ENCODE measurements at regions of chr2 and their contacts with region 1.

Region 1: GRCh38 chr2:33475224-33476130 is 972 bp upstream of the RASGRP3 start:
- DNase-seq: no peak
- ATAC-seq: peak; percentile 64
- H3K4me3 ChIP-seq: peak overlapping the region; percentile 91
- H3K27ac ChIP-seq: peak overlapping the region; percentile 97
- H3K4me1 ChIP-seq: peaks cover 3% of the 10 kb centered on the region; the same call in 1 of the 2 replicates
- H3K27me3 ChIP-seq: no peaks in the 10 kb centered on the region
- CTCF ChIP-seq: peak; percentile 86 to 93 (median 88)
- EP300 ChIP-seq: peak in 1 of 2 experiments; percentile 37; a peak in 1 of 4 replicates
- POLR2A ChIP-seq: peak; percentile 3; the same call in 1 of the 2 replicates
- RAD21 ChIP-seq: peak; percentile 74

Region 2: DNA sequence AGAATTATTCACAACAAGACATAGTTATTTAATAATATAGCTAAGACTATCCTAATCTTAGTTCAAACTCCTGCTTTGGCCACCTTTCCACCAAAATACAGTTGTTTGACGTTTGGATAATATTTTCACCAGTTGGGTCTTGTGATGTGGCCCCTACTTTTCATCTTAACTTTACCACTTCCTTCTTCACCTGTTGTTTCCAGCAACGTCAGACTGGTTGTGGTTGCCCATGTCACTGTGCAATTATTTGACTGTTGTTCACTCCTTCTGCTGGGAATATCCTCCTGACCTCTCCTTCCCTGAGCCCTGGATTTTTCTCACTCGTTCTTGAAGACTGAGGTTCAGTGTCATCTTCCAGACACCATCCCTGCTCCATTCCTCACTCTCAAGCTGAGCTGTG is 131.2 kb before region 1 on chr2:
- CTCF ChIA-PET with region 1: no interaction called
- POLR2A ChIA-PET with region 1: no interaction called
- RAD21 ChIA-PET with region 1: no interaction called
- SMC1A ChIA-PET with region 1: no interaction called
- in situ Hi-C with region 1: no loop called
- intact Hi-C with region 1: no loop called
- DNase-seq: no peak
- ATAC-seq: no peak
- H3K4me3 ChIP-seq: no peak overlapping the region
- H3K27ac ChIP-seq: no peak overlapping the region
- H3K4me1 ChIP-seq: no peaks in the 10 kb centered on the region
- H3K27me3 ChIP-seq: no peaks in the 10 kb centered on the region
- CTCF ChIP-seq: no peak
- EP300 ChIP-seq: no peak
- POLR2A ChIP-seq: no peak
- RAD21 ChIP-seq: no peak

Region 3: DNA sequence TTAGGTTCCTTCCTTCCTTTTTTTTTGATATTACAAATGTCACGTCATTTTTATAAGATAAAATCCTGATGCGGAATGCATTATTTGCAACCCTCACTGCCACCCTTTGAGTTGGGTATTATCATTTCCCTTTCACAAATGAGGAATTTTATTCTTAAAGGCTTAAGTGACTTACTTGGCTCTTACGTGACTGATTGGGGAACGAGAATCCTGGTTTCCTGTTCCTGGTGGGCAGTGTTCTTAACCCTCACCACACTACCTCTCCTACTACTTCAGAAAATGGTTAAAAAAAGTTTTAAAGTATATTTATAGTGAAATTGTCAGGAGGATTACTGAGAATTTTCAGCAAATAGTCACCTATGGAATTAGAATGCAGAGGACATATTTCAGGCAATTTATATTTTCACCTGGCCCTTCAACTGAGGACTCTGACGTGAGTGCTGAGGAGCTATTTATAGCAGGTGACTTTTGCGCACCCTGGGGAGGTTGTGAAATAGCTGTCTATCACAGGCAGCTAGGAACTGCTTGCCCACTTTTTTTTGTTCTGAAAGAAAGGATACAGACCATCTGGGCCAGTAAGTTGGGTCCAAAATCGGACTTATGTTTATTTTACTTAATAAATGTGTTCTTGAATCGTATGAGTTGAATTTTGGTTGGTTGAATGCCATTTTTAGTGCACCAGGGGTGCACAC is 17.8 kb before region 1 on chr2:
- CTCF ChIA-PET with region 1: interaction called, 14 read pairs
- POLR2A ChIA-PET with region 1: no interaction called
- RAD21 ChIA-PET with region 1: interaction called, 8 read pairs
- SMC1A ChIA-PET with region 1: interaction called, 3 read pairs
- in situ Hi-C with region 1: no loop called
- intact Hi-C with region 1: no loop called
- DNase-seq: no peak
- ATAC-seq: peak; percentile 82
- H3K4me3 ChIP-seq: no peak overlapping the region
- H3K27ac ChIP-seq: no peak overlapping the region
- H3K4me1 ChIP-seq: no peaks in the 10 kb centered on the region
- H3K27me3 ChIP-seq: no peaks in the 10 kb centered on the region
- CTCF ChIP-seq: no peak
- EP300 ChIP-seq: no peak
- POLR2A ChIP-seq: no peak
- RAD21 ChIP-seq: no peak

Region 4: GRCh38 chr2:33497221-33497650 is 21.8 kb after region 1 on chr2:
- CTCF ChIA-PET with region 1: interaction called, 26 read pairs
- POLR2A ChIA-PET with region 1: interaction called, 36 read pairs
- RAD21 ChIA-PET with region 1: interaction called, 222 read pairs
- SMC1A ChIA-PET with region 1: interaction called, 258 read pairs
- in situ Hi-C with region 1: no loop called
- intact Hi-C with region 1: loop called (anchors 1 kb)
- DNase-seq: peak; percentile 92
- ATAC-seq: peak; percentile 62
- H3K4me3 ChIP-seq: peak overlapping the region; percentile 66
- H3K27ac ChIP-seq: peak overlapping the region; percentile 91
- H3K4me1 ChIP-seq: peaks cover 75% of the 10 kb centered on the region
- H3K27me3 ChIP-seq: no peaks in the 10 kb centered on the region
- CTCF ChIP-seq: no peak
- EP300 ChIP-seq: peak; percentile 84 to 86; a peak in 3 of 4 replicates
- POLR2A ChIP-seq: no peak
- RAD21 ChIP-seq: no peak

Region 5: GRCh38 chr2:33529771-33530351 is 54.4 kb after region 1 on chr2:
- CTCF ChIA-PET with region 1: interaction called, 16 read pairs
- POLR2A ChIA-PET with region 1: interaction called, 31 read pairs
- RAD21 ChIA-PET with region 1: interaction called, 11 read pairs
- SMC1A ChIA-PET with region 1: interaction called, 6 read pairs
- in situ Hi-C with region 1: no loop called
- intact Hi-C with region 1: loop called (anchors 1 kb)
- DNase-seq: peak; percentile 26
- ATAC-seq: peak; percentile 61
- H3K4me3 ChIP-seq: no peak overlapping the region
- H3K27ac ChIP-seq: peak overlapping the region; percentile 98
- H3K4me1 ChIP-seq: peaks cover 47% of the 10 kb centered on the region
- H3K27me3 ChIP-seq: no peaks in the 10 kb centered on the region
- CTCF ChIP-seq: no peak
- EP300 ChIP-seq: no peak
- POLR2A ChIP-seq: no peak
- RAD21 ChIP-seq: no peak

Region 6: DNA sequence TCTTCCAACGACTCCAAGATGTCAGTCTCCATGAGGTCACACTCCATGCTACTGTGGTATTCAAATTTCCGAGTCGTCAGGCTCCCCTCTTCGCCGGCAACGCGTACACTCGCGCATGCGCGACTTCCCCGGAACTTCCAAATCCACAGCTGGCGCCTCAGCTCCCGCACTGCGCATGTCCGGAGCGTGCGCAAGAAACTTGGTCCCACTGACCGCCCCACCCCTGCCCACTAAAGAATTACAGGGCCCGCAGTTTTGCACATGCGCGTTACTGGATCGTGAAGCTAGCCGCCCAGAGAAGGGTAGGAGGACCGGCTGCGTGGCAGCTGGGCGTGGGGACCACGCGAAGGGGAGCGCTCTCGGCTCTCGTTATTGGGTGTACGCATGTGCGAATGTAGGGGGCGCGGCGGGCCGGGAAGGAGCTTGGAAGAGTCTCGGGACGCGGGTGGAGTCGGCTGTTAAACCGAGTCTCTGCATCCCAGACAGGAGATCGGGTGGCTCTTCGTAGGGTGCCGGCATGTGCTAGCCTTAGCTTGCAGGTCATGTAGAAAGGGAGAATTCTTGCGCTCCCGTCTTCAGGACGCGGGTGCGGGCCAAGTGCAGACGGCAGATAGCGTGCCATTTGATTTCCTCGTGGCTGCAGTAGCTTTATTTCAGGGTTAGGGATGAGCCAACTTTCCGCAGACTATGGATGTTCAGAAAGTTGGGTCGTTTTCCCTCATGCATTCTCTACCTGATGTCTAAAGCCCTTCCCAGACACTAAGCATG is 123.9 kb after region 1 on chr2 and contains the start of gene FAM98A:
- CTCF ChIA-PET with region 1: interaction called, 24 read pairs
- POLR2A ChIA-PET with region 1: interaction called, 22 read pairs
- RAD21 ChIA-PET with region 1: interaction called, 13 read pairs
- SMC1A ChIA-PET with region 1: interaction called, 9 read pairs
- in situ Hi-C with region 1: no loop called
- intact Hi-C with region 1: loop called (anchors 5 kb)
- DNase-seq: peak; percentile 96
- ATAC-seq: peak; percentile 92
- H3K4me3 ChIP-seq: peak within 1 kb of the TSS; percentile 94
- H3K27ac ChIP-seq: peak within 1 kb of the TSS; percentile 96
- H3K4me1 ChIP-seq: no peaks in the 10 kb centered on the region
- H3K27me3 ChIP-seq: no peaks in the 10 kb centered on the region
- CTCF ChIP-seq: peak in 2 of 3 experiments; percentile 1 to 10; a peak in 1 of 6 replicates
- EP300 ChIP-seq: 0 out of 4 replicates have a peak, but pooled peaks of 1 of the 2 experiments have one; percentile 14
- POLR2A ChIP-seq: peak; percentile 75
- RAD21 ChIP-seq: no peak
- polyA plus RNA-seq, gene FAM98A: 34.4 to 55.6 TPM

Region 7: DNA sequence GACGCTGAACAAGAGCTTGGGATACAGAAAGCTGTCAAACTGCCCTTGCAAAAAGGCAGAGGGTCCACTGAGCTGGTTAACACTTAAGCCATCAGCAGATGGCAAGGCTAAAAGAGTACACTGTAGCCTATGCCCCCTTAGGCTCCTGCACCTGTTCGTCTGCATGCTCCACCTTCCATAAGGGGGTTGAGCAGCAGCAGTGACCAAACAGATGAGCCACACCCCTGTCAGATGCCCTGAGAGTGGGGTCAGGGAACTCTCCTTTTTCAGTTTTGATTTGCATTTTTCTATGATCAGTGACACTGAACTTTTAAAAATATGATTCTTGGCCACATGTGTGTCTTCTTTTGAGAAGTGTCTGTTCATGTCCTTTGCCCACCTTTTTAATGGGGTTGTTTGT is 526.1 kb after region 1 on chr2:
- CTCF ChIA-PET with region 1: no interaction called
- POLR2A ChIA-PET with region 1: no interaction called
- RAD21 ChIA-PET with region 1: no interaction called
- SMC1A ChIA-PET with region 1: no interaction called
- in situ Hi-C with region 1: no loop called
- intact Hi-C with region 1: no loop called
- DNase-seq: no peak
- ATAC-seq: peak; percentile 43; the same call in 2 of the 3 replicates
- H3K4me3 ChIP-seq: no peak overlapping the region
- H3K27ac ChIP-seq: no peak overlapping the region
- H3K4me1 ChIP-seq: no peaks in the 10 kb centered on the region
- H3K27me3 ChIP-seq: no peaks in the 10 kb centered on the region; a peak in 1 of 4 replicates
- CTCF ChIP-seq: no peak
- EP300 ChIP-seq: no peak
- POLR2A ChIP-seq: no peak
- RAD21 ChIP-seq: no peak